PC-9 (cell line): ENCODE measurements at regions of chr3 and their contacts with region 1.

Region 1: GRCh38 chr3:71537211-71537611 is 46.3 kb downstream of the FOXP1 start:
- DNase-seq: peak in 1 of 2 experiments; percentile 54
- H3K4me3 ChIP-seq: no peak overlapping the region
- H3K27ac ChIP-seq: no peak overlapping the region
- H3K4me1 ChIP-seq: peaks cover 14% of the 10 kb centered on the region; the same call in 1 of the 2 replicates
- H3K27me3 ChIP-seq: no peaks in the 10 kb centered on the region
- CTCF ChIP-seq: no peak

Region 2: DNA sequence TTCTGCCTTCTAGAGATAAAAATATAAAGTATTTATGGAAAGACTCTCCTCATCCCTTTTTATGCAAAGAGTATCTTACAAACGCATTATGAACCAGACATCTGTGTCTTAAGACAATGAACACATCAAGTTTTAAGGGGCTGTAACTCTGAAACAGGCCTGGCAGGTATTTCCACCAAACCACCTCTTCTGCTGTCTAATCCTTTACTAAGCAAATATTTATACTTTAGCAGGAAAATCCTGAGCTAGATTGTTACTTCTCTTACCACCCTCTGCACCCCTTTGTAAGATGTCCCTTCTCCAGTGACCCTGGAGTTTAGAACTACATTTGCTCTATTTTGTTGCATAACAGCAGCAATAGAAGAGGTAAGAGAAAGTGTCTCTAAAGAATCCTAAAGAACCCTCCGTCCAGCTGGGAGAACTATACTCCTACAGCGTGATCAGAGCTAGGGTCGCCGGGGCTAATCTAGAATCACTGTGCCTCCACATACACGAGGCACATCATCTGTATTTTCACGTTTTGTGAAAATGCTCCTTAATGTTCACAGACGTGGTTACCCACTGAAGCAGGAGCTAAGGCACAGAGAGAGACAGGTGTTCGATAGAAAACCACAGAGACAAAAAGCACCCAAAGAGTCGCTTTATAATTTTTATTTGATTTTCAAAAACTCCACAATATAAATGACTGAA is 83.2 kb before region 1 on chr3:
- CTCF ChIA-PET with region 1: interaction called, 11 read pairs
- POLR2A ChIA-PET with region 1: no interaction called
- intact Hi-C with region 1: no loop called
- DNase-seq: peak in 1 of 2 experiments; percentile 41
- H3K4me3 ChIP-seq: no peak overlapping the region
- H3K27ac ChIP-seq: no peak overlapping the region
- H3K4me1 ChIP-seq: peaks cover 16% of the 10 kb centered on the region
- H3K27me3 ChIP-seq: no peaks in the 10 kb centered on the region
- CTCF ChIP-seq: no peak

Region 3: GRCh38 chr3:71495708-71496472 is 41.3 kb before region 1 on chr3:
- CTCF ChIA-PET with region 1: no interaction called
- POLR2A ChIA-PET with region 1: no interaction called
- intact Hi-C with region 1: loop called (anchors 5 kb)
- DNase-seq: peak; percentile 28 to 68
- H3K4me3 ChIP-seq: no peak overlapping the region; the same call in 1 of the 2 replicates
- H3K27ac ChIP-seq: peak overlapping the region; percentile 68
- H3K4me1 ChIP-seq: peaks cover 19% of the 10 kb centered on the region
- H3K27me3 ChIP-seq: no peaks in the 10 kb centered on the region
- CTCF ChIP-seq: no peak

Region 4: GRCh38 chr3:71504250-71505036 is 32.8 kb before region 1 on chr3:
- CTCF ChIA-PET with region 1: no interaction called
- POLR2A ChIA-PET with region 1: no interaction called
- intact Hi-C with region 1: loop called (anchors 2 kb)
- DNase-seq: peak; percentile 43 to 70
- H3K4me3 ChIP-seq: peak overlapping the region; percentile 50
- H3K27ac ChIP-seq: peak overlapping the region; percentile 89
- H3K4me1 ChIP-seq: peaks cover 22% of the 10 kb centered on the region
- H3K27me3 ChIP-seq: no peaks in the 10 kb centered on the region
- CTCF ChIP-seq: no peak

Region 5: GRCh38 chr3:71690341-71690841 is 153.2 kb after region 1 on chr3:
- CTCF ChIA-PET with region 1: no interaction called
- POLR2A ChIA-PET with region 1: no interaction called
- intact Hi-C with region 1: no loop called
- DNase-seq: no peak
- H3K4me3 ChIP-seq: no peak overlapping the region
- H3K27ac ChIP-seq: no peak overlapping the region
- H3K4me1 ChIP-seq: no peaks in the 10 kb centered on the region
- H3K27me3 ChIP-seq: peaks cover 16% of the 10 kb centered on the region; the same call in 1 of the 2 replicates
- CTCF ChIP-seq: no peak